Left colon (tissue), 2 donors: ENCODE measurements at regions of chr13 and their contacts with region 1.

Region 1: GRCh38 chr13:33542283-33543088 is 256.9 kb upstream of the STARD13 start:
- DNase-seq: peak; percentile 98
- ATAC-seq: peak; percentile 86

Region 2: GRCh38 chr13:32594157-32594738 is 948.2 kb before region 1 on chr13:
- intact Hi-C with region 1: loop called in 1 of 2 experiments (anchors 10 kb)
- DNase-seq: no peak
- ATAC-seq: peak; percentile 11

Region 3: GRCh38 chr13:33228648-33229445 is 313.6 kb before region 1 on chr13:
- intact Hi-C with region 1: loop called in 1 of 2 experiments (anchors 10 kb)
- DNase-seq: no peak
- ATAC-seq: peak; percentile 77